ENCODE measurements at regions of chrX and their contacts with region 1.

Region 1: DNA sequence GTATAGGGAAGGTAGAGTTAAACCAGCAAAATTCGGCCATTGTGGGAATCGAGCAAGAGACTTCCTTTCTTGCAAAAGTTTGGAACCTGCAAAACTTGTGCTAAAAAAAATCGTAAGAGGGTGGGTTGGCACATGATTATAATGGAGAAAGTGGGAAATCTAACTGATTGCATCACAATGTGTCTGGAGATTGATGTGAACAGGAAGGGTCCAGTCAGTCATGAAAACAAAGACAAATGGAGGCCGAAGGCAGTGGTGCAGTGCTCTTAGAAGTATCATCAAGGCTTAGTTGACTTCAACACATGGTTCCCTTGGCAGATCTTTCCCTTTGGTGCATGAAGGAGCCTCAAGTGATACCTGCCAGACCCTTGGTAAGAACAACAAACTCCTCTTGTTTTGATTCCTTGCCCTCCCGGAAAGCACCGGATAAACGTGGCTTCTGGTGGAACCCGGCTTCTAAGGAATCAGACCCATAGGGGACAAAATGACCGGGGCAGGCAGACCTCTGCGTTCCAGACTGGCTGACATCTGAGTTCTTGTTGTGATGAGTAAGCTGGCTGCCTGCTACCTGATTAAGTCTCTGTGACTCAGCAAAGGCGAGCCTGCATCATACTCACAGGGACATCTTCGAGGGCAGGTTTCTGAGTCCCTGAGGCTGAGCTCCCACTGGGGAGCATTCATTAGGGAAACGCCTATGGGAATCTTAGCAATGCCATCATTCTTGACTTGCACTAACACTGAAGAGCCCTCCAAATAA is 87.7 kb upstream of the MAP3K15 start:
- DNase-seq: peak; percentile 82
- ATAC-seq: peak; percentile 100
- H3K4me3 ChIP-seq: no peak overlapping the region
- H3K27ac ChIP-seq: peak overlapping the region; percentile 28
- H3K4me1 ChIP-seq: peaks cover 14% of the 10 kb centered on the region
- H3K27me3 ChIP-seq: no peaks in the 10 kb centered on the region
- CTCF ChIP-seq: no peak

Region 2: DNA sequence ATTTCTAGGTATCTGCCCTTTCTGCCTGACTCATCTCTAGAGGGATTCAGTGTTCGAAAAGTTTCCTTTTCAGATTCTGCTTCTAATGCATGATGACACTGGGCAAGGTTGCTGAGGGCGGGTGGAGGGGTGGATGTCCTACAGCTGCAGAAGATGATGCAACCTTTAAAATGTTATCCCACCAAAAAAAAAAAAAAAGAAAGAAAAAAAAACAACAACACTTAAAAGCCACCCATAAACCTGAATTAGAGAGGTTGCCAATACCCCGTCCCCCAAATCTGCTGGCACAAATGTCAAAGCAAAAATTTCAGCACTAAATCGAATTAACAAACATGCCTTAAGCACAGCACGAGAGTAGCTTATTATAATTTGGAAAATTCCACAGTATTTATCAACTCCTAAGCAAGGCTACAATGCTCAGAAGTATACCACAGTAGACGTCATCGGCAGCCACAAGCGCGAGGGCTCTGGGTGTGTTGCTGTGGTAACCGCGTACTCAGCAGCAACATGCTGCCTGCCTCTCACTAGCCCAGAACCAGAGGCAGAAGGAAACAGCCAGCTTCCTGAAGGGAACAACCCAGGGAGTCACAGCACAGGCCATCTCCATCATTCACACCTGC is 79.8 kb after region 1 on chrX:
- CTCF ChIA-PET with region 1: no interaction called
- POLR2A ChIA-PET with region 1: no interaction called
- intact Hi-C with region 1: no loop called
- DNase-seq: peak; percentile 32
- ATAC-seq: peak; percentile 58
- H3K4me3 ChIP-seq: peak overlapping the region; percentile 43; the same call in 1 of the 2 replicates
- H3K27ac ChIP-seq: peak overlapping the region; percentile 89
- H3K4me1 ChIP-seq: peaks cover 28% of the 10 kb centered on the region
- H3K27me3 ChIP-seq: no peaks in the 10 kb centered on the region
- CTCF ChIP-seq: no peak

Region 3: DNA sequence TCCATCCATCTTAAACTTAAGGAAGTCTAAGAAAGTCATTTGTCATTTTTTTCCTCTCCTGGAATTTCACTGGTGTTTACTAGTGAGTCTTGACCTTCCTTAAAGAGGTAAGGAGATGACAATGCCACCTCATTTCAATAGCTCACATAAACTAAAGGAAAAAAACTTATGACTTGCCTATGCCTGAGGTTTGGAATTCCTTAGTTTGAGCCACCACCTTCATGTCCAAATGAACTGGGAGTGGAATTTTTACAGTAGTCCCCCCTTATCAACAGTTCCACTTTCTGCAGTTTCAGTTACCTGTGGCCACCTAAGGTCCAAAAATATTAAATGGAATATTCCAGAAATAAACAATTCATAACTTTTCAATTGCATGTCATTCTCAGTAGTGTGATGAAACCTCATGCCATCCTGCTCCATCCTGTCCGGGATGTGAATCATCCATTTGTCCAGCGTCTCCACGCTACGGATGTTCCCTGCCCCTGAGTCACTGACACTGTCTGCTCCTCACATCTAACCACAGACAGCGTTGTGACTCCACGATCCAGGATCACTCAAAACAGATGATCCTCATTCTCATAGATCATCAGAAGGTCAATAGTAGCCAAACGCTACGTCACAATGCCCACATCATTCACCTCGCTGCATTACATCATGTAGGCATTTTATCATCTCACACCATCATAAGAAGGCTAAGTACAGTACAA is 106.9 kb after region 1 on chrX:
- CTCF ChIA-PET with region 1: no interaction called
- POLR2A ChIA-PET with region 1: no interaction called
- intact Hi-C with region 1: no loop called
- DNase-seq: peak; percentile 87
- ATAC-seq: peak; percentile 100
- H3K4me3 ChIP-seq: no peak overlapping the region
- H3K27ac ChIP-seq: peak overlapping the region; percentile 91
- H3K4me1 ChIP-seq: peaks cover 22% of the 10 kb centered on the region
- H3K27me3 ChIP-seq: no peaks in the 10 kb centered on the region
- CTCF ChIP-seq: no peak

Region 4: DNA sequence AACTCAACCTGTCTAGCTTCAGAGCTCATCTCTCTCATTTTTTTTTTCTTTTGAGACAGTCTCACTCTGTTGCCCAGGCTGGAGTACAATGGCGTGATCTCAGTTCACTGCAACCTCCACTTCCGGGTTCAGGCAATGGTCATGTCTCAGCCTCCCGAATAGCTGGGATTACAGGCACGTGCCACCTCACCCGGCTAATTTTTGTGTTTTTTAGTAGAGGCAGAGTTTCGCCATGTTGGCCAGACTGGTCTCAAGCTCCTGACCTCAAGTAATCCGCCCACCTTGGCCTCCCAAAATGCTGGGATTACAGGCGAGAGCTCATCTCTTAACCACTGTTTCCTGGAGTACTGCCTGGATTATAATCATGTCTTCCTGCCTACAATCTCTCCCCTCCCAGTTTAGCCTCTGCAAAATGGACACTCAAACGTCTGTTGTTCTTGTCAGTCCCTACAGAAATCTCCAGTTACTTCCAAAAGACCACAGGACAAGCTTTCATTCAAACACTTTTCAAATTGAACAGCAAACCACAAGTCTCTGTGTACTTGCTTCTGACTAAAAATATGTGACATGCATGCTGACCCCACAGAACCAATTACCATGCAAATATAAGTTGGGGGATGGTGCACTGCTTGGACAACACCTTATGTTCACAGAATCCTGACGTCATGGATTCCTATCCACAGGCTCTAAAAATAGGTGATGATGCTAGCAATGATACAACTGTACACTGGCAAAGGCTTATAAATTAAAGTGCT is 147.2 kb after region 1 on chrX:
- CTCF ChIA-PET with region 1: no interaction called
- POLR2A ChIA-PET with region 1: interaction called, 10 read pairs
- intact Hi-C with region 1: no loop called
- DNase-seq: no peak
- ATAC-seq: no peak
- H3K4me3 ChIP-seq: no peak overlapping the region
- H3K27ac ChIP-seq: no peak overlapping the region
- H3K4me1 ChIP-seq: no peaks in the 10 kb centered on the region
- H3K27me3 ChIP-seq: no peaks in the 10 kb centered on the region
- CTCF ChIP-seq: no peak